Dendritic cell treated with granulocyte-macrophage colony-stimulating factor and Interleukin-4, amounts not matched to agents 40 ng/mL and 50 ng/mL, for 4 days (primary cell): ENCODE measurements at regions of chr2 and their contacts with region 1.

Region 1: GRCh38 chr2:166179201-166179600 is 51.4 kb upstream of the SCN1A start:
- H3K4me3 Mint-ChIP-seq: no peak overlapping the region
- H3K27ac Mint-ChIP-seq: no peak overlapping the region
- H3K4me1 Mint-ChIP-seq: no peaks in the 10 kb centered on the region
- H3K27me3 Mint-ChIP-seq: no peaks in the 10 kb centered on the region

Region 2: DNA sequence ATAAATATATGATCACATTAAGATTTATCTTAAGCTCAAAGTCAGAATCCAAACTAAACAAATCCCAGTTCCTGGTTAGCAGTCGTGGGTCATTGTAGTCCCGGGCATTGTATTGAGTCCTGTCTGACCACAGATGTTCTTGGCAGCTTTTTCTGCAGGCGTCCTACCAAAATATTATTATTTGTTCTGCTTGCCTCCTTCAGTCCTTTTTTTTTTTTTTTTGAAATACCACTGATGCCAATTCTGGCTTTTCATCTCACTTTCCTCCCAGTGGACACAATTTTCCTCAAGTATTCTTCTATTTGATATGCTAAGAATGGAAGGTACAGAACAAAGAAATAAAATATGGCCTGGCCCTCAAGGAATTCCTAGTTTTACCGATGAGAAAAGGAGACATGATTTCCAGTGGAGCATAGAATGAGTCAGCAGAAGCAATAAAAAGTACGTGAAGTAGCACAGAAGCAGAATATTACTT is 558.1 kb before region 1 on chr2:
- intact Hi-C with region 1: no loop called
- H3K4me3 Mint-ChIP-seq: no peak overlapping the region
- H3K27ac Mint-ChIP-seq: no peak overlapping the region
- H3K4me1 Mint-ChIP-seq: no peaks in the 10 kb centered on the region
- H3K27me3 Mint-ChIP-seq: no peaks in the 10 kb centered on the region

Region 3: GRCh38 chr2:166361351-166362153 is 182.4 kb after region 1 on chr2:
- intact Hi-C with region 1: no loop called
- H3K4me3 Mint-ChIP-seq: no peak overlapping the region
- H3K27ac Mint-ChIP-seq: peak overlapping the region; percentile 10
- H3K4me1 Mint-ChIP-seq: peaks cover 35% of the 10 kb centered on the region
- H3K27me3 Mint-ChIP-seq: no peaks in the 10 kb centered on the region

Region 4: DNA sequence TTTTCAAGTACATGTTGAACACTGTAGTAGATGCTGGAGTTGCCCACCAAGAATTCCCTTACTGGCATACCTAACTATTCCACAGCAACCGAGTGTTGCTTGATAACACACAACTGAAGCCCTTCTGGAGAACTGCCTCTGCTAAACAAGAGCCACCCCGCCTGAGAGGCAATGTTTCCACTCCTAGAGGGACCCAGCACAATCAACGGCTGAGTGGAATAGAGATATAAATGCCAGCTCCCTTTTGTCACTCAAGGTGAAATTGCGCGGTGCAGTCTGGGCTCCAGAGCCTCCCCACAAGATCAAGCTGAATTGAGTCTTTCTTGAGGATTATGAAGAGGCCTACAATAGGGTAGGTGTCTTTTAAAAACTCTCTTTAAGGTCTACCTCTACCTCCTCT is 245.6 kb after region 1 on chr2:
- intact Hi-C with region 1: loop called (anchors 5 kb)
- H3K4me3 Mint-ChIP-seq: no peak overlapping the region
- H3K27ac Mint-ChIP-seq: no peak overlapping the region
- H3K4me1 Mint-ChIP-seq: peaks cover 5% of the 10 kb centered on the region
- H3K27me3 Mint-ChIP-seq: no peaks in the 10 kb centered on the region

Region 5: DNA sequence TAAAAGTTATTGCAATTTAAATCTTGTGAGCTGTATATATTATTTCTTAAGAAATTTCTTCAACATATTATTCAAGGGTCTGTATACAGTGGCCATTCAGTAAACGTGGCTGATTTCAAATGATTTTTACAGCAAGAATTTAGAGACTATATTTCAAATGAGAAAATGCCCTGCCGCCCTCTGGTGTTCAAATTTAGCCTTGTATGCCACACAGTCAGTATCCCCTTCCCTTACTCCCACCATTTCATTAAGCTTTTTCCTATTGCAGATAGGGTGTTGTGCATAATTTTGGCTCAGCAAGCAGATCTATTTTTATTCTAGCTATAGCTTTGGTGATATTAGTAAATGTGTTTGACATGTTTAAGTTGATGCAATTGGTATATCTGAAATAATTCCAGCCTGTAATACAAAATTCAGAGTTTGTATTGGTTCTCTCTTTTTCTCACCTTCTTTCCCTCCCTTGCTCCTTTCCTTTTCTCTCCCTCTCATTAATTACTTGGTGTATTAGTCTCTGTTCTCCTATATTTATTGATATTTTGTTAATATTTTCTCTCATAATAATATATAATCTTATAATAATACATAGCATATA is 337.6 kb after region 1 on chr2:
- intact Hi-C with region 1: loop called (anchors 5 kb)
- H3K4me3 Mint-ChIP-seq: no peak overlapping the region
- H3K27ac Mint-ChIP-seq: no peak overlapping the region
- H3K4me1 Mint-ChIP-seq: no peaks in the 10 kb centered on the region
- H3K27me3 Mint-ChIP-seq: no peaks in the 10 kb centered on the region